ENCODE measurements at regions of chr19 and their contacts with region 1.

Region 1: GRCh38 chr19:46346821-46347571 is at the start of gene PPP5C:
- DNase-seq: peak; percentile 72
- H3K4me3 ChIP-seq: peak within 1 kb of the TSS; percentile 99
- H3K27ac ChIP-seq: peak within 1 kb of the TSS; percentile 31
- H3K27me3 ChIP-seq: peaks cover 3% of the 10 kb centered on the region
- CTCF ChIP-seq: peak; percentile 95
- polyA plus RNA-seq, gene PPP5C: 73.7 and 85.9 TPM in 2 replicates

Region 2: GRCh38 chr19:46324277-46324676 is 22.7 kb before region 1 on chr19:
- CTCF ChIA-PET with region 1: interaction called, 13 read pairs
- POLR2A ChIA-PET with region 1: no interaction called
- DNase-seq: no peak
- H3K4me3 ChIP-seq: no peak overlapping the region
- H3K27ac ChIP-seq: no peak overlapping the region
- H3K27me3 ChIP-seq: no peaks in the 10 kb centered on the region
- CTCF ChIP-seq: no peak

Measured in AG04450 (cell line).